ENCODE measurements at regions of chr1 and their contacts with region 1.

Region 1: GRCh38 chr1:17606826-17607440 is 67.4 kb downstream of the ARHGEF10L start:
- DNase-seq: peak; percentile 33
- H3K4me3 ChIP-seq: no peak overlapping the region
- H3K27ac ChIP-seq: no peak overlapping the region
- H3K27me3 ChIP-seq: no peaks in the 10 kb centered on the region
- CTCF ChIP-seq: peak; percentile 96

Region 2: DNA sequence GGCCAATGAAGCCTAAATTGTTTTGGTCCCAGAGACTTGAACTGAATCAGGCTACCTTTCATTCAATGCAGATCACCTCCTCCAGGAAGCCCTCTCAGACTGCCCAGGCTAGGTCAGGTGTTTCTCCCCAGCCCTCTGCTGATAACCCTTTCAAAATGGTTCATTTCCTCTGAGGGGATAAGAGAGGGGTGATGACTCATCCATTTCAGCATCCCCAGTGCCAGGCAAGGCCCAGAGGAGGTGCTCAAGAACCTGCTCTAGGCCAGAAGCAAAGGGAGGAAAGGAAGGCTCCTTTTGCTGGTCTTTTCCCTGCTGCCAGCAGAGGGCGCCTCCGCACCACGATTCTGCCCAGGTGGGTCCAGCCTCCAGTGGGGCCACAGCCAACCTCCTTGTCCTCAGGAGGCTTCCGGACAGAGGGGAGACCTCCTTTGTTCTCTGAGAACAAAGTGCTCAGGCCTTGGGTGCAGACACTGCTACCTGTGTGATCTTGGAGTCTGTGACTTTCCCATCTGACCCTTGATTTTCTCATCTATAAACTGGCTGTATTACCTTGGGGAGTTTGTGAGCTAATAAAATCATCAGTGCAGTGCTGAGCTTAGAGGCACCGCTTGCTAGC is 112.7 kb before region 1 on chr1:
- CTCF ChIA-PET with region 1: interaction called, 299 read pairs
- POLR2A ChIA-PET with region 1: interaction called, 4 read pairs
- DNase-seq: peak; percentile 20
- H3K4me3 ChIP-seq: no peak overlapping the region
- H3K27ac ChIP-seq: no peak overlapping the region
- H3K27me3 ChIP-seq: peaks cover 9% of the 10 kb centered on the region
- CTCF ChIP-seq: peak; percentile 95

Region 3: GRCh38 chr1:17507916-17508315 is 99.0 kb before region 1 on chr1:
- CTCF ChIA-PET with region 1: interaction called, 299 read pairs
- POLR2A ChIA-PET with region 1: no interaction called
- DNase-seq: no peak
- H3K4me3 ChIP-seq: no peak overlapping the region
- H3K27ac ChIP-seq: no peak overlapping the region
- H3K27me3 ChIP-seq: peaks cover 9% of the 10 kb centered on the region
- CTCF ChIP-seq: peak; percentile 29; the same call in 1 of the 2 replicates

Region 4: GRCh38 chr1:17531682-17532487 is 75.0 kb before region 1 on chr1:
- CTCF ChIA-PET with region 1: interaction called, 10 read pairs
- POLR2A ChIA-PET with region 1: no interaction called
- DNase-seq: no peak
- H3K4me3 ChIP-seq: no peak overlapping the region
- H3K27ac ChIP-seq: peak overlapping the region; percentile 31
- H3K27me3 ChIP-seq: peaks cover 5% of the 10 kb centered on the region
- CTCF ChIP-seq: no peak

Region 5: DNA sequence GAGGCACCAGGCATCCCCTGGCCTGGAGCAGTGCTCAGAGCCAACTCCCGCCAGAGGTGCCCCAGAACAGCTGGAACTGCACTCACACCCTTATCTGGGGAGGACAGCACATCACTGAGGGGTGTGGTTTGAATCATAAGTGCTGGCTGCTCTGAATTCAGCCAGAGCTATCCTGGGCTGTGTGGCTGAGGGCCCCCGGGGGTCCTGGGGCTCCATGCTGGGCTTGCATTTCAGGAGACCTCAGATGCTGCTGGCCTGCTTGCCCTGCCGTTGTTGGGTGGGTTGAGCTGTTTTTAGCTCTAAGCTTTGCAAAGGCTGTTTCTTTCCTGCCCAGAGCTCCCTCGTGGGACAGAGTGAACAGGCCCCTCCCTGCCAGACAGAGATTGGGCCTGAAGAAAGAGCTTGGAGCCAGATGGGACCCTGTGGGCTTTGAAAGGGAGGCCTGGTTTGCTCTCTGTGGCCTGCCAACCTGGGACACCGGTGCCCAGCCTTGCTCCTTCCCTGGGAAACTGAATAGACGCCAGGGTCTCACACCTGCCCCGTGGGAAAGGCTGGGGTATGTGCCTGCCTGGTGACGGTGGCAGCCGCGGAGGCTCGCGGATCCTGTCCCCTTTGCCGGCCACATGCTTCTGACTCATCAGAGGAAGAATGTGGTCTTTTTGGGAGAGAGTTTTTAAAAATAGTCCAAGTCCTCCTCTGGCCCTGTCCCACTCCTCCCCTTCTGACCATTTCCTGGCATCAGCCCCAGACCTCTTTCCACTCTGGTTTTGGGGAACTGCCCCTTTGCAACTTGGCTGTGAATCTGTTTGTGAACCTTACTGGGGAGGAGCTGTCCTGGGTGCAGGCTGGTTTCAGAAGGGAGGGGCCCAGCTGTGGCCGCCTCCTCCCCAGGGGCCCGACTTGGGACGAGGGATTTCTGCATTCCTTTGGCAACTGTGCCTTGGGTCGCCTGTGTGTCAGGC is 37.5 kb before region 1 on chr1:
- CTCF ChIA-PET with region 1: interaction called, 29 read pairs
- POLR2A ChIA-PET with region 1: no interaction called
- DNase-seq: no peak
- H3K4me3 ChIP-seq: no peak overlapping the region
- H3K27ac ChIP-seq: peak overlapping the region; percentile 97
- H3K27me3 ChIP-seq: no peaks in the 10 kb centered on the region
- CTCF ChIP-seq: no peak

Region 6: GRCh38 chr1:17596651-17597509 is 10.1 kb before region 1 on chr1:
- CTCF ChIA-PET with region 1: interaction called, 20 read pairs
- POLR2A ChIA-PET with region 1: no interaction called
- DNase-seq: no peak
- H3K4me3 ChIP-seq: no peak overlapping the region
- H3K27ac ChIP-seq: no peak overlapping the region
- H3K27me3 ChIP-seq: no peaks in the 10 kb centered on the region
- CTCF ChIP-seq: no peak

Region 7: GRCh38 chr1:17768651-17769241 is 161.8 kb after region 1 on chr1:
- CTCF ChIA-PET with region 1: no interaction called
- POLR2A ChIA-PET with region 1: no interaction called
- DNase-seq: peak; percentile 68
- H3K4me3 ChIP-seq: no peak overlapping the region
- H3K27ac ChIP-seq: peak overlapping the region; percentile 85
- H3K27me3 ChIP-seq: no peaks in the 10 kb centered on the region
- CTCF ChIP-seq: no peak